HEK293 (cell line): ENCODE measurements at regions of chr6 and their contacts with region 1.

Region 1: DNA sequence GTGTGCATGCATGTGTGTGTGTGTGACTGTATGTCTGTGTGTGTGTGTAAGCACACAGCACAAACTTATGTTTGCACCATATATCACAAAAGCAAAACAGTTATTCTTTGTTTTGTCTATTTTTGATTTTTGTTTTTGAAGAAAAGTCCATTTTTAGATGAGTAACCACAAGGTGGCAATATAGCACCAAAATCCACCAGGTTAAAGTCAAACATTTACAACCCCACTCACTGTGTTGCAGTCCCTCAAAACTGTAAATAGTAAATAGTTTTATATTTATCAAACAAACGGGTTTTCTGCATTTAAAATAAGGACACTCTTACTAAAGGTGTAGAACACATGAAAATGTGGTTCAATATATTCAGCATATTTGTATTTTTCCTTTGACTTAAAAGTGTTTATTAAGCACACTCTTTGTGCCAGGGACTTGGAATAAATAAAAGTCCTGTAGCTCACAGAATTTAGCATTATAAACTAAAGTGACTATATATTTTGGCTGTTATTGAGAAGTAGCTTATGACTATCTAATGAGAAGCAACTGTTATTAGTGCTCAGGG is 118.5 kb downstream of the GFRAL start:
- H3K4me3 ChIP-seq: no peak overlapping the region
- H3K27ac ChIP-seq: no peak overlapping the region
- H3K4me1 ChIP-seq: no peaks in the 10 kb centered on the region
- CTCF ChIP-seq: 0 out of 2 replicates have a peak, but pooled peaks have one; percentile 33

Region 2: GRCh38 chr6:55276745-55277530 is 168.8 kb before region 1 on chr6:
- CTCF ChIA-PET with region 1: interaction called, 36 read pairs
- POLR2A ChIA-PET with region 1: no interaction called
- H3K4me3 ChIP-seq: no peak overlapping the region
- H3K27ac ChIP-seq: no peak overlapping the region
- H3K4me1 ChIP-seq: no peaks in the 10 kb centered on the region
- CTCF ChIP-seq: peak; percentile 37; the same call in 1 of the 2 replicates

Region 3: GRCh38 chr6:55886185-55886836 is 440.6 kb after region 1 on chr6:
- CTCF ChIA-PET with region 1: interaction called, 52 read pairs
- POLR2A ChIA-PET with region 1: no interaction called
- H3K4me3 ChIP-seq: no peak overlapping the region
- H3K27ac ChIP-seq: no peak overlapping the region
- H3K4me1 ChIP-seq: peaks cover 13% of the 10 kb centered on the region
- CTCF ChIP-seq: no peak

Region 4: DNA sequence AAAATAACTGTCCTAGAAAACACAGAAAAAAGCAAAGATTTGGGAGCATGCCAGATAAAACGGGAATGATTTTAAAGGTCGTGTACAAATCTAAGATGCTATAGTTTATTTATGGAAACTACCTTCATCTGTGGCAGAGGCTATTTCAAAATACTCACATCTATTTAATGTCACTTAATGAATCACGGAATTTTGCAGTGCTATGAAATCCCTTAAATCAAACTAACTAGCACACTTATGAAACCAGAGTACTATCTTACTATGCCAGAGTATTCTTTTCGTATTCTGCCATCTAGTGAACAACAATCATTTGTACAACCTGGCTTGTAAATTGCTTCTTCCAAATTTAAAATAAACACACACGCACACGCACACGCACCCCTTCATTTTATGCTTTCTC is 507.6 kb after region 1 on chr6:
- CTCF ChIA-PET with region 1: interaction called, 101 read pairs
- POLR2A ChIA-PET with region 1: no interaction called
- H3K4me3 ChIP-seq: no peak overlapping the region
- H3K27ac ChIP-seq: no peak overlapping the region
- H3K4me1 ChIP-seq: no peaks in the 10 kb centered on the region; the same call in 1 of the 2 replicates
- CTCF ChIP-seq: peak; percentile 22; the same call in 1 of the 2 replicates

Region 5: DNA sequence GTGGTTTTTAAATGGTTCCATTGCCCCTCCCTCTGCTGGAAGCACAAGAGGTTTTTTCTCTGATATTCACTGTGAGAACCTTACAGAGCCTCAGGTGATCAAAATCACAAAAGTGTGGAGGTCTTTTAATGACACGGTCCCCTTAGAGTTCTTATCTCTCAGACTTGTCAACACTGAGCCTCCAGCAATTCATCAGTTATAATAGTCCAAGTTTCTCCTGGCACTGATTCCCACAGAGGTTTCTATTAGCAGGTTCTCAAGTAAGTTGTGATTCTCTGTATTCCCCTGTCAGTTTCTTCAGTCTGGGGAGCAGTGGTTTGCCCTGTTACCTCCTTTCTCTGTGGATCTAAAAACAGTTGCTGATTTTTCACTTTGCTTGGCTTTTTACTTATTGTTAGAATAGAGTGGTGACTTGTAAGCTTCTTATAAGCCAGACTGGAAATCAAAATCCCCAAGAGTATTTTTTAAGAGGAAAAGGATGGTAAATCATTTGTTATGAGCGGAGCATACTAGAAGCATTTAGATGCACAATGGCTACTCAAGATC is 587.1 kb after region 1 on chr6:
- CTCF ChIA-PET with region 1: no interaction called
- POLR2A ChIA-PET with region 1: interaction called, 12 read pairs
- H3K4me3 ChIP-seq: no peak overlapping the region
- H3K27ac ChIP-seq: no peak overlapping the region
- H3K4me1 ChIP-seq: peaks cover 6% of the 10 kb centered on the region; the same call in 1 of the 2 replicates
- CTCF ChIP-seq: no peak